Heart right ventricle (tissue), 16 donors: ENCODE measurements at regions of chr18 and their contacts with region 1.

Region 1: GRCh38 chr18:67977067-67977616 is 460.6 kb upstream of the DSEL start:
- DNase-seq: no peak
- ATAC-seq: no peak
- H3K4me3 ChIP-seq: no peak overlapping the region
- H3K27ac ChIP-seq: no peak overlapping the region
- H3K4me1 ChIP-seq: no peaks in the 10 kb centered on the region
- H3K27me3 ChIP-seq: no peaks in the 10 kb centered on the region
- CTCF ChIP-seq: no peak

Region 2: GRCh38 chr18:67500522-67501205 is 476.5 kb before region 1 on chr18:
- intact Hi-C with region 1: no loop called
- DNase-seq: no peak
- ATAC-seq: no peak
- H3K4me3 ChIP-seq: no peak overlapping the region
- H3K27ac ChIP-seq: no peak overlapping the region
- H3K4me1 ChIP-seq: no peaks in the 10 kb centered on the region
- H3K27me3 ChIP-seq: no peaks in the 10 kb centered on the region
- CTCF ChIP-seq: no peak

Region 3: DNA sequence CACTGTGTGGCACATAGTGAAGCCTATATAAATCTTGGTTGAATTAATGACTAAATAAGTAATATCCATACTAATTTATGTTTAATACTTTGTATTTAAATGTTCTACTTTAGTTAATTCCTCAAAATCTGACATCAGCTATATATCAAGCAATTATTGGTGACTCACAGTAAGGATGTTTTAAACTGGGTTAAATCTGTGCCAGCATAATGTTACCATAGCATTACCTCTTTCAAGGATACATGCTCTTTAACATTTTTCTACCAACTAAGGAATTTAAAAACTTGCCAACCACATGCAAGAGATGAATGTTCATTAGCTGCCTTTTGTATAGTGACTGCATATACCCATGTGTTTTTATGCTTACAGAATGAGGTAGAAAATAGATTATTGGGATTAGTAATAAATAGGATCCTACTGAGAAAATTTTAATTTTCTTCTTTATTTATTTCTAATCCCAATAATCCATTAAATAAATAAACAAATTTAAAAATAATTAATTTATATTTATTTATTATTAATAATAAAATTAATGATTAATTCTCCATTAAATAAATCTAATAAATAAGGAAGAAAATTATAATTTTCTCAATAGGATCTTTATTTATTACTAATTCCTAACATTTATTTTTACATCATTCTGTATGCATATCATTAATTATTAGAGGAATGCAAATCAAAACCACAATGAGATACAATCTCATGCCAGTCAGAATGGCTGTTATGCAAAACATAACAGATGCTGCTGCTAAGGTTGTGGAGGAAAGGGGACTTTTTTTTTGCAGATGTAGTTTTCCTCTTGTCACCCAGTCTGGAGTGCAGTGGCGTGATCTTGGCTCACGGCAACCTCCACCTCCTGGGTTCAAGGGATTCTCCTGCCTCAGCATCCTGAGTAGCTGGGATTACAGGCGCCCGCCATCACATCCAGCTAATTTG is 49.9 kb before region 1 on chr18:
- intact Hi-C with region 1: loop called in 1 of 10 experiments (anchors 10 kb)
- DNase-seq: no peak
- ATAC-seq: no peak
- H3K4me3 ChIP-seq: no peak overlapping the region
- H3K27ac ChIP-seq: no peak overlapping the region
- H3K4me1 ChIP-seq: no peaks in the 10 kb centered on the region
- H3K27me3 ChIP-seq: no peaks in the 10 kb centered on the region
- CTCF ChIP-seq: no peak

Region 4: DNA sequence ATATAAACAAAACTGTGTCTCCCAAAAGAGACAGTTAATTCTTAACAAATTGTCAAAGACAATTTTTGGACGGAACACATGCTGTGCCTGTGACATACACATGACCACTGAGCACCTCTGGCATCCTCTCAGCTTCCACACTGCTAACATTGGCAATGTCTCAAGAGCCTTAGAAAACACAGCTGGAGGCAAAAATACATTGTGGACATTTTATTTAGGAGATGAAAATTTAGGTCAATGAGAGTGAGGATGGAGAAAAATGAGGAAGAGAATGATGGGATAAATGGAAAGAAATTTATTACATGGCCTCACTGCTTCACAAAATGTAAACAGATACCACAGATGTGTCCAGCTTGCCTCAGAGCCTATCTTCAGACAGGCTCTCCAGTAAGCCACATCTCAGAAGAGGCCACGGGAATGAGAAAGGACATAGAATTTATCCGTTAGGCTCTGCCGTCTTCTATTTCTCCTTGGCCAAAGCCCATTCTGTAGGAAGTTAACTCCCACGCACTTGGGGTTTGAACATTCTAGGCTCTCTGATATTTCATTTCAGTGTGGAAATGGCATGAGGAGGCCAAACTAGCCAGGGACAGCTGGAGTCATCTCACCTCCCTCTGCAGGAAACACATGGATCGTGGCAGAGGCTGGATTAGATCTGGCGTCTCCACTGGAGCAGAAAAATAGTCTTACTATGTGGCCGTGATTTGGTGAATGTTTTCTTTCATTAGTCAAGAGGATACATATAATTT is 58.8 kb after region 1 on chr18:
- intact Hi-C with region 1: loop called in 1 of 10 experiments (anchors 10 kb)
- DNase-seq: no peak
- ATAC-seq: peak in 6 of 8 donors; percentile 47 to 68 (median 58)
- H3K4me3 ChIP-seq: no peak overlapping the region
- H3K27ac ChIP-seq: no peak overlapping the region
- H3K4me1 ChIP-seq: no peaks in the 10 kb centered on the region
- H3K27me3 ChIP-seq: no peaks in the 10 kb centered on the region
- CTCF ChIP-seq: no peak